Mucosa of descending colon (tissue), 3 donors: ENCODE measurements at regions of chr10 and their contacts with region 1.

Region 1: DNA sequence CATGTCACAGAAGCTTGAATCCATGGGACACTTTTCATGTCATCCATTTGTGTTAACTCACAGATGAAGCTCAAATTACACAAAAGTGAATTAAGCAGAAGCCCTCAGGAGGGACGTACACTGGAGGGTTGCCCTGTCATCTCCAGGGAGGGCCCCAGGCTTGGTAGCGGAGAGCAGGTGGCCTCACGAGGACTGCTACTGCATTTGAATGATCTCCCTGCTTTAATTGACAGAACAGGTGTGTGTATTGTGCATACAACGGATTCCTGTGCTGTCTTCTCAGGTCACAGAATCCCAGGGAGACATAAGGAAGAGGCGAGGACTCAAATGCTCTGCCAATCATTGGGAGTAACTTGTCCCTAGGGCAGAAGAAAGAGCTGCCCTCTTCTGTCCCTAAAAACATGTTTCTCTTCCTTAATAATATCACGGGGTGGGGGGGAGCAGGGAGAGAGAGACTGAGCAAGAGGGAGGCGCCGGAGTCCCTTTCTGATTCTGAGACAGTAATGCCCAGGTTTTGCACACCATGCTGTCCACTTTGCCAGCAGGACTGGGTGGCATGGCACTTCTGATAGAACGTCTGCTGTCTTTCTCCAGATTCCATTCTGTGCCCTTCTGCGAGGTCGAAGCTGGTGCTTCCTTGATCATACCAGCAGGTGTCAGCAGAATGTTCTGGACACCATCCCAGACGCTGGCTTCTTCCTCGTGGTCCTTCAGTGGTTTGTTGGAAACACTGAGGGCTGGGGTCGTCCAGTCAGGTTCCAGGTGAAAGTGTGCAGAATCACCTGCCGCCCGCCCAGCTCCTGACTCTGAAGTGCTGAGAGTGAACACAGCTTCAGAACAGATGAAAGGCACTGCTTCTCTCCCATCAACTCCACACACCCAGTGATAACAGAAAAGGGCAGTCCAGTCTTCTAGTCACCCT is 26.2 kb upstream of the RASGEF1A start:
- DNase-seq: peak in 2 of 3 donors; percentile 51 to 70
- ATAC-seq: peak; percentile 86
- H3K4me3 ChIP-seq: no peak overlapping the region
- H3K4me1 ChIP-seq: peaks cover 5% of the 10 kb centered on the region
- CTCF ChIP-seq: peak; percentile 62

Region 2: GRCh38 chr10:43204943-43205671 is 87.9 kb before region 1 on chr10:
- intact Hi-C with region 1: no loop called
- DNase-seq: peak; percentile 40 to 57 (median 53)
- ATAC-seq: peak; percentile 66
- H3K4me3 ChIP-seq: no peak overlapping the region
- H3K4me1 ChIP-seq: peaks cover 6% of the 10 kb centered on the region
- CTCF ChIP-seq: peak; percentile 44

Region 3: GRCh38 chr10:43348511-43349312 is 55.7 kb after region 1 on chr10:
- intact Hi-C with region 1: loop called (anchors 10 kb)
- DNase-seq: peak; percentile 85 to 94 (median 91)
- ATAC-seq: peak; percentile 96
- H3K4me3 ChIP-seq: no peak overlapping the region
- H3K4me1 ChIP-seq: peaks cover 4% of the 10 kb centered on the region
- CTCF ChIP-seq: peak; percentile 87

Region 4: GRCh38 chr10:43461950-43462349 is 168.9 kb after region 1 on chr10:
- intact Hi-C with region 1: loop called (anchors 10 kb)
- DNase-seq: peak in 1 of 3 donors; percentile 83
- ATAC-seq: peak; percentile 87
- H3K4me3 ChIP-seq: no peak overlapping the region
- H3K4me1 ChIP-seq: no peaks in the 10 kb centered on the region
- CTCF ChIP-seq: peak; percentile 22